CD8-positive, alpha-beta memory T cell (primary cell): ENCODE measurements at regions of chr17 and their contacts with region 1.

Region 1: GRCh38 chr17:44775136-44775837 is 16.5 kb downstream of the ADAM11 start:
- DNase-seq: peak; percentile 67 to 98 (median 96)
- H3K4me3 ChIP-seq: peak overlapping the region; percentile 81
- H3K4me3 Mint-ChIP-seq: peak overlapping the region; percentile 87 to 94 (median 89)
- H3K27ac ChIP-seq: no peak overlapping the region
- H3K27ac Mint-ChIP-seq: peak overlapping the region in 6 of 8 donors; percentile 6 to 87 (median 49)
- H3K4me1 ChIP-seq: peaks cover 16% of the 10 kb centered on the region
- H3K4me1 Mint-ChIP-seq: peaks cover 5 to 20% (median 7%) of the 10 kb centered on the region in 3 donors
- H3K27me3 ChIP-seq: no peaks in the 10 kb centered on the region
- H3K27me3 Mint-ChIP-seq: peaks cover 1 to 8% of the 10 kb centered on the region in 2 donors

Region 2: GRCh38 chr17:44864866-44865660 is 89.8 kb after region 1 on chr17:
- CTCF ChIA-PET with region 1: interaction called, 141 read pairs
- POLR2A ChIA-PET with region 1: no interaction called
- DNase-seq: peak; percentile 52 to 75 (median 55)
- H3K4me3 ChIP-seq: no peak overlapping the region
- H3K4me3 Mint-ChIP-seq: no peak overlapping the region
- H3K27ac ChIP-seq: no peak overlapping the region
- H3K27ac Mint-ChIP-seq: peak overlapping the region in 2 of 8 donors; percentile 23 to 38
- H3K4me1 ChIP-seq: no peaks in the 10 kb centered on the region
- H3K4me1 Mint-ChIP-seq: no peaks in the 10 kb centered on the region
- H3K27me3 ChIP-seq: no peaks in the 10 kb centered on the region
- H3K27me3 Mint-ChIP-seq: no peaks in the 10 kb centered on the region

Region 3: GRCh38 chr17:44878627-44879221 is 103.4 kb after region 1 on chr17:
- CTCF ChIA-PET with region 1: interaction called, 17 read pairs
- POLR2A ChIA-PET with region 1: no interaction called
- DNase-seq: peak in 1 of 5 donors; percentile 13
- H3K4me3 ChIP-seq: no peak overlapping the region
- H3K4me3 Mint-ChIP-seq: no peak overlapping the region
- H3K27ac ChIP-seq: no peak overlapping the region
- H3K27ac Mint-ChIP-seq: peak overlapping the region in 2 of 8 donors; percentile 2 to 65
- H3K4me1 ChIP-seq: no peaks in the 10 kb centered on the region
- H3K4me1 Mint-ChIP-seq: peaks cover 0 to 4% (median 3%) of the 10 kb centered on the region in 3 donors
- H3K27me3 ChIP-seq: no peaks in the 10 kb centered on the region
- H3K27me3 Mint-ChIP-seq: no peaks in the 10 kb centered on the region

Region 4: DNA sequence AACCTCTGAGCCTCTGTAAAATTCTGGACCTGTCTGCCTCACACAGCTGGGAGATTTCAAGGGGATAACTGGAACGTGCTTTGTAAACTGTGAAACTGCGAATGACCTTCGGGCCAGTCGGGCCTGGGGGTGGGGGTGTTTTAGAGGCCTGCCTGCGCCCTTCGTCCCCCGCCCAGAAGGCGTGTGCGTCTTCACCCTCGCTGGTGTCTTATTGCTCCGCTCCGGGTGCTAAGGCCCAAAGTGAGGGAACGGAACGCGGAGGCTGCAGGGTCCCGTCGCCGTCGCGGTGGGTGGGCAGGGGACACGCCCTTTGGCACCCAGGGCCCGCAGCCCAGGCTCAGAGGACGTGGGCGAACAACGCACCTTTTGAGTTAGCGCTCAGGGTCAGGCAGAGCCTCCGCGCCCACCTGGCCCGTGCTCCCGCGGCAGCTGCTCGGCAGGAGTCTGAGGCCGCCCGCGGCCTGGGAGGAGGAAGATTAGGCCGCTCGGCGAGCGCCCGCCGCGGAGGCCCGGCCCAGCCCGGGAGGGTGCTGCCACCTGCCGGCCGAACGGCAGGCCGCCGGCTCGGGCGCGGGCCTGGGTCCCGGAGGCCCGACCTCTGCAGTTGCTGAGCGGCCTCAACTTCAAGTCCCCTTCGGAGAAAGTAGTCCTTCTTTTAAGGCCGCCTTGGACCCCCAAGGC is 246.5 kb after region 1 on chr17:
- CTCF ChIA-PET with region 1: interaction called, 18 read pairs
- POLR2A ChIA-PET with region 1: no interaction called
- DNase-seq: peak; percentile 48 to 67 (median 57)
- H3K4me3 ChIP-seq: no peak overlapping the region
- H3K4me3 Mint-ChIP-seq: peak overlapping the region; percentile 12 to 74 (median 62)
- H3K27ac ChIP-seq: no peak overlapping the region
- H3K27ac Mint-ChIP-seq: peak overlapping the region in 1 of 8 donors; percentile 84
- H3K4me1 ChIP-seq: peaks cover 20% of the 10 kb centered on the region
- H3K4me1 Mint-ChIP-seq: peaks cover 13 to 21% (median 21%) of the 10 kb centered on the region in 3 donors
- H3K27me3 ChIP-seq: peaks cover 32% of the 10 kb centered on the region
- H3K27me3 Mint-ChIP-seq: peaks cover 19 to 37% of the 10 kb centered on the region in 2 donors